Endothelial cell of umbilical vein (primary cell): ENCODE measurements at regions of chr3 and their contacts with region 1.

Region 1: GRCh38 chr3:57100046-57100695 is 39.7 kb downstream of the SPATA12 start:
- DNase-seq: peak; percentile 83
- H3K4me3 ChIP-seq: no peak overlapping the region
- H3K27ac ChIP-seq: no peak overlapping the region
- H3K4me1 ChIP-seq: peaks cover 6% of the 10 kb centered on the region
- H3K27me3 ChIP-seq: no peaks in the 10 kb centered on the region
- CTCF ChIP-seq: peak; percentile 77 to 80
- POLR2A ChIP-seq: no peak

Region 2: DNA sequence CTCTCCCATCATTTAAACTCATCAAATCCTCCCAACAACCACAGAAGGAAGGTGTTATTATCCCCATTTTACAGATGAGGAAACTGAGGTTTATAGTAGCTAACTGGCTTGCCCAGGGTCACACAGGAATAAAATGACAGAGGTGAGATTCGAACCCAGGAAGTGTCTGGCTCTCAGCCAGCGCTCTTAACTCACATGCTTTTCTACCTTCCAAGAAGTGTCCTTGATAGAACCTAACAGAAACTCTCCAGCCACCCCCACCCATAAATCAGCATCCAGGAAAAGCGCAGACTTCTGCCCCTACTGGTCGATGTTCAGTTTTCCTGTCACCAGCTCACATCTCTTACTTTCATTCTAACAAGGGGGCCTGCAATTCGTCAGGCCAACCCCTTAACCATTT is 12.0 kb after region 1 on chr3:
- CTCF ChIA-PET with region 1: interaction called, 10 read pairs
- POLR2A ChIA-PET with region 1: no interaction called
- dilution Hi-C with region 1: no loop called
- intact Hi-C with region 1: no loop called
- DNase-seq: no peak
- H3K4me3 ChIP-seq: no peak overlapping the region
- H3K27ac ChIP-seq: no peak overlapping the region
- H3K4me1 ChIP-seq: no peaks in the 10 kb centered on the region
- H3K27me3 ChIP-seq: peaks cover 7 to 8% of the 10 kb centered on the region in 2 experiments
- CTCF ChIP-seq: peak; percentile 31
- POLR2A ChIP-seq: no peak

Region 3: GRCh38 chr3:57221883-57222282 is 121.7 kb after region 1 on chr3:
- CTCF ChIA-PET with region 1: interaction called, 8 read pairs
- POLR2A ChIA-PET with region 1: no interaction called
- dilution Hi-C with region 1: no loop called
- intact Hi-C with region 1: loop called (anchors 1 kb)
- DNase-seq: peak; percentile 37
- H3K4me3 ChIP-seq: no peak overlapping the region
- H3K27ac ChIP-seq: no peak overlapping the region
- H3K4me1 ChIP-seq: peaks cover 4% of the 10 kb centered on the region
- H3K27me3 ChIP-seq: no peaks in the 10 kb centered on the region
- CTCF ChIP-seq: no peak
- POLR2A ChIP-seq: no peak

Region 4: GRCh38 chr3:57434041-57434440 is 333.9 kb after region 1 on chr3:
- CTCF ChIA-PET with region 1: interaction called, 3 read pairs
- POLR2A ChIA-PET with region 1: no interaction called
- dilution Hi-C with region 1: no loop called
- intact Hi-C with region 1: loop called (anchors 1 kb)
- DNase-seq: peak; percentile 57
- H3K4me3 ChIP-seq: no peak overlapping the region
- H3K27ac ChIP-seq: no peak overlapping the region
- H3K4me1 ChIP-seq: no peaks in the 10 kb centered on the region
- H3K27me3 ChIP-seq: no peaks in the 10 kb centered on the region
- CTCF ChIP-seq: peak; percentile 24 to 48
- POLR2A ChIP-seq: no peak

Region 5: GRCh38 chr3:57555738-57556458 is 455.7 kb after region 1 on chr3 and contains the start of gene PDE12:
- CTCF ChIA-PET with region 1: no interaction called
- POLR2A ChIA-PET with region 1: no interaction called
- dilution Hi-C with region 1: no loop called
- intact Hi-C with region 1: loop called (anchors 5 kb)
- DNase-seq: peak; percentile 89
- H3K4me3 ChIP-seq: peak within 1 kb of the TSS; percentile 44 to 84 (median 48)
- H3K27ac ChIP-seq: peak within 1 kb of the TSS; percentile 81
- H3K4me1 ChIP-seq: peaks cover 16% of the 10 kb centered on the region
- H3K27me3 ChIP-seq: no peaks in the 10 kb centered on the region
- CTCF ChIP-seq: no peak
- POLR2A ChIP-seq: peak; percentile 90
- total RNA-seq, gene PDE12: 19.0 and 20.4 TPM in 2 replicates

Region 6: GRCh38 chr3:57852896-57853295 is 752.7 kb after region 1 on chr3:
- CTCF ChIA-PET with region 1: interaction called, 20 read pairs
- POLR2A ChIA-PET with region 1: no interaction called
- dilution Hi-C with region 1: no loop called
- intact Hi-C with region 1: loop called (anchors 1 kb)
- DNase-seq: peak; percentile 54
- H3K4me3 ChIP-seq: no peak overlapping the region
- H3K27ac ChIP-seq: no peak overlapping the region
- H3K4me1 ChIP-seq: no peaks in the 10 kb centered on the region
- H3K27me3 ChIP-seq: no peaks in the 10 kb centered on the region
- CTCF ChIP-seq: peak in 1 of 2 donors; percentile 6
- POLR2A ChIP-seq: no peak